MCF 10A (cell line): ENCODE measurements at regions of chr3 and their contacts with region 1.

Region 1: DNA sequence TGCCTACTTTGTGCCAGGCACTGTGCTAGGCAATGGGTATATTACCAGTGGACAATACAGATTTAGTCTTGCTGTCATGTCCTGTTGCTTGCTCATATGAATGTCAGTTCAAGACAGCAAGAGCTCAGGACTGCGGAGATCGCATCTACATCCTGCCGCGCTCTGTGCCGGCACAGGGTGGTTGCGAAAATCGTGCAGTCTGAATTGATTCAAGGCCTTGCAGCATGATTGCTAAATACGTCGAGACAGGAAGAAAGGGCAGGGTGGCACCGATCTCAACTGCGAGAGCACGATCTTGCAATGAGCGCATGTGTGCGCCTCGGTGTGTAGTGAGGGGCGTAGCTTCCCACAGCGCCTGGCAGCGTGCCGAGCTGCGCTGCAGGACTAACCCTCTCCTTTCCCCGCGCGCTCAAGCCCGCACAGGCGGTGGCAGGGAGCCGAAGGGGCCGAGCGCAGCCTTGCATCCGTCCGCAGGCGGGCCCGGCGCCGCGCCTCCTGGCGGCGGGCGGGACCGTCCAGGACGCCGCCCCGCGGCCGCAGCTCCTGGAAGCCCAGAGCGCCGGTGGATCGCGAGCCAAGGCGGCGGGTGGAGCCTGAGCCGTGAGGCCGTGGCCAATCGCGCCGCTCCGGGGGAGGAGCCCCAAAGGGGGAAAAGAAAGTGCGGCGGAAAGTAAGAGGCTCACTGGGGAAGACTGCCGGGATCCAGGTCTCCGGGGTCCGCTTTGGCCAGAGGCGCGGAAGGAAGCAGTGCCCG is at the start of gene IL1RAP:
- DNase-seq: peak; percentile 95
- H3K4me3 Mint-ChIP-seq: peak within 1 kb of the TSS; percentile 88
- H3K27ac Mint-ChIP-seq: peak within 1 kb of the TSS; percentile 78
- H3K4me1 Mint-ChIP-seq: peaks cover 36% of the 10 kb centered on the region
- H3K27me3 Mint-ChIP-seq: no peaks in the 10 kb centered on the region
- CTCF ChIP-seq: peak; percentile 38
- total RNA-seq, gene IL1RAP: 46.5 and 62.0 TPM in 2 replicates

Region 2: DNA sequence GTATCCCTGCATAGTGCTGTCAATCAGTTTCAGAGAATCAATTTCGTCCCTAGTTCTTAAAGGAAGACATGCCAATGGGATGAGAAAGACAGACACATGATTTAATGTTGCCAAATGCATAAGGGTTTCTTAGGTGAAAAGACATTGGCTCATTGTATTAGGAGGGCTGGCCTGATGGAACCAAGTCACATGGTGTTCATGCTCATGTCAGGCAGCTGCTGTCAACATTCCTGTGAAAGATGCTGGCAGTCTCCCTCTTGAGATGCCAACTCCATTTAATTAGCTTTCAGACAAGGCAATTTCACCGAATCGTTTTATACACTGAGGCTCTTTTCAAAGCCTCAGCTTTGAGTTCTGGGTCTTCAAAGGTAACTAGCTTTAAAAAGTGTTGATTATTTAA is 15.8 kb before region 1 on chr3:
- CTCF ChIA-PET with region 1: interaction called, 4 read pairs
- POLR2A ChIA-PET with region 1: interaction called, 27 read pairs
- intact Hi-C with region 1: no loop called
- DNase-seq: no peak
- H3K4me3 Mint-ChIP-seq: no peak overlapping the region
- H3K27ac Mint-ChIP-seq: no peak overlapping the region
- H3K4me1 Mint-ChIP-seq: no peaks in the 10 kb centered on the region
- H3K27me3 Mint-ChIP-seq: no peaks in the 10 kb centered on the region
- CTCF ChIP-seq: no peak

Region 3: GRCh38 chr3:190526787-190527762 is 13.5 kb after region 1 on chr3:
- CTCF ChIA-PET with region 1: interaction called, 4 read pairs
- POLR2A ChIA-PET with region 1: interaction called, 199 read pairs
- intact Hi-C with region 1: loop called (anchors 2 kb)
- DNase-seq: peak; percentile 69
- H3K4me3 Mint-ChIP-seq: no peak overlapping the region
- H3K27ac Mint-ChIP-seq: no peak overlapping the region
- H3K4me1 Mint-ChIP-seq: peaks cover 42% of the 10 kb centered on the region
- H3K27me3 Mint-ChIP-seq: no peaks in the 10 kb centered on the region
- CTCF ChIP-seq: no peak

Region 4: DNA sequence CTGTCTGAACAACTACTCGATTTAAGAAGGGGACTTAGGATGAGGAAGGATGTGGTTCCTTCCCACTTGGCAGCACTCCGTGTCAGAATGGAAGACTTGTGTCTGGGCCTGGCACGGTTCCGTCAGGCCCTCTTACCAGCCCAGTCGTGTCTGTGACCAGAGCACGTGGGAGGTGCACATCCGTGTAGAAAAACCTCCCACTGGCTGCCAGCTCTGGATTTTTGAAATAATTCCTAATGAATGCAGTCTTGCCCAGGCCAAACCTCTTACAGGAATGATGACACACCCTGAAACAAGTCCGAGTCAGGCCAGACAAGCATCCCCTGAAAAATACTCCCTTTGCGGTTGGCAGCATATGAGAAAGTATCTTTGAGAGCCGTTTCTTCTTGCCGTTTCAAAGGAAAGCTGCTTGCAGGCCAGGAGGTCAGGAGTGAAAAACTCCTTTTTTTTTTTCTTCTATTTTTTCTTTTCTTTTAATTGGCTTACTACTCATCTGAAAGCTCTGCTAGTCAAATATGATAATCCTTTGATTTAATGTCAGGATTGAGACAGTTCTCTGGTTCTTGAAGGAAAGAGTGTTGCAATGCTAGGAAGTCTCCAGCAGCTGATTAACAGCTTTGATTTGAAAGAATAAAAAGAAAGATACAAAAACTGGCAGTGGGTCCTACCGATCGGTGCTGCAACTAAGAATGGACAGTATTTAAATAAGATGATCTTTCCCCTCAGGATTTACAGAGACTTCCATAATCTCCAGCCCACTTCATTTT is 20.1 kb after region 1 on chr3:
- CTCF ChIA-PET with region 1: interaction called, 7 read pairs
- POLR2A ChIA-PET with region 1: interaction called, 199 read pairs
- intact Hi-C with region 1: loop called (anchors 2 kb)
- DNase-seq: peak; percentile 94
- H3K4me3 Mint-ChIP-seq: peak overlapping the region; percentile 69
- H3K27ac Mint-ChIP-seq: peak overlapping the region; percentile 96
- H3K4me1 Mint-ChIP-seq: peaks cover 55% of the 10 kb centered on the region
- H3K27me3 Mint-ChIP-seq: no peaks in the 10 kb centered on the region
- CTCF ChIP-seq: no peak

Region 5: DNA sequence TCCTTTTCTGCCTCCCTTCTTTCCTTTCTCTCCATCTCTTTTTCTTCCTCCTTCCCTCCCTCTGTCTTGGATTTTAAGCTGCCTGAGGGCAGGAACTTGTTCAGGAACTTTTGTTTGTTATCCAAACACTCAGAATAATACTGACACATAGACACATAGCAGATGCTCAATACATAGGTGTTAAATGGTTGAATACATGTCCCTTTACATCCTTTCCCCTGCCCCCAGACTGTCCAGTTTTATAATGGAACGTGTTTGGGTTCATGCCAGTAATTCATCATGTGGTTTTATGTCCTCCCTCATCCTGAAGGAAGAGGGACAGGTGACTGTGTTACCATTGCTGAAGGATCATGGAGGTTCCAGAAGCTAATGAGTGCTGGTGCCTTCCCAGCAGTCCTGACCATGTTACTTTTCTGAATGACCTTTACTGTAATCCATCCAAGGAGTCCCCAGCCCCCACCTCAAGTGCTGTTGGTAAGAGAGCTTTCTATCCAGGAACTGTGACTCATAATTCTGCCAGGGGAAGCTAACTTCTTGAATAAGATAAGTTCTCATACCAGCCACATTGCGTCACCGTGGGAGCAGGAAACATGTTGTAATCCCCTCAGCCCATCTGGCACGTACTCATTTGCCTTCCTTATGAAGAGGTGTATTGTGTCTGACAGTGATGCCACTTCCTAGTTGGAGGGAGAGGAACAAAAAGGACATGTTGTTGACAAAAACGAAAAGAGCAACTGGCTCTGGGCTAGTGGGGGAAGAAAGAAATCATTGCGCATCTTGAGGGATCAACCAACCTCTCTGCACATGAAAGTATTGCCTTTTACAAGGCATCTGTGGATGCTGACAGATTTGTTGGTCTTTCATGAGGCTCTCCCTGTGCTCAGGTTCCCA is 52.7 kb after region 1 on chr3:
- CTCF ChIA-PET with region 1: interaction called, 4 read pairs
- POLR2A ChIA-PET with region 1: interaction called, 13 read pairs
- intact Hi-C with region 1: loop called (anchors 1 kb)
- DNase-seq: peak; percentile 100
- H3K4me3 Mint-ChIP-seq: peak overlapping the region; percentile 48
- H3K27ac Mint-ChIP-seq: peak overlapping the region; percentile 66
- H3K4me1 Mint-ChIP-seq: peaks cover 20% of the 10 kb centered on the region
- H3K27me3 Mint-ChIP-seq: no peaks in the 10 kb centered on the region
- CTCF ChIP-seq: no peak

Region 6: GRCh38 chr3:190585805-190586630 is 72.4 kb after region 1 on chr3:
- CTCF ChIA-PET with region 1: interaction called, 3 read pairs
- POLR2A ChIA-PET with region 1: interaction called, 10 read pairs
- intact Hi-C with region 1: loop called (anchors 5 kb)
- DNase-seq: peak; percentile 97
- H3K4me3 Mint-ChIP-seq: peak overlapping the region; percentile 48
- H3K27ac Mint-ChIP-seq: peak overlapping the region; percentile 78
- H3K4me1 Mint-ChIP-seq: peaks cover 27% of the 10 kb centered on the region
- H3K27me3 Mint-ChIP-seq: no peaks in the 10 kb centered on the region
- CTCF ChIP-seq: no peak

Region 7: DNA sequence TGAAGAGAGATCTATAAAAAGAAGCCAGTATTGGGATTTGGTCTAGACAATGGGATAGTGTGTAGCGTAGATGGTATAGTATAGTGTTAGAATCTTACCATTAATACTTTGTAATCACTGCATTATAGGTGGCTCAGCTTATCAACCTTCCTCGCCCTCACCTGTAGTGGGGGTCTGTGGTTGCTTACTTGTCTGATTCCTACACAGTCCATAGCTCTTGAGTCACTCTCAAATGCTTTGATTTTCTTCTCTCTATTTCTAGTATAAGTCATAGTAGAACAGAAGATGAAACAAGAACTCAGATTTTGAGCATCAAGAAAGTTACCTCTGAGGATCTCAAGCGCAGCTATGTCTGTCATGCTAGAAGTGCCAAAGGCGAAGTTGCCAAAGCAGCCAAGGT is 115.5 kb after region 1 on chr3:
- CTCF ChIA-PET with region 1: interaction called, 3 read pairs
- POLR2A ChIA-PET with region 1: interaction called, 4 read pairs
- intact Hi-C with region 1: loop called (anchors 5 kb)
- DNase-seq: no peak
- H3K4me3 Mint-ChIP-seq: no peak overlapping the region
- H3K27ac Mint-ChIP-seq: no peak overlapping the region
- H3K4me1 Mint-ChIP-seq: no peaks in the 10 kb centered on the region
- H3K27me3 Mint-ChIP-seq: no peaks in the 10 kb centered on the region
- CTCF ChIP-seq: no peak